ENCODE measurements at regions of chr2 and their contacts with region 1.

Region 1: GRCh38 chr2:13006829-13007717 is 290.3 kb downstream of the TRIB2 start:
- DNase-seq: no peak
- ATAC-seq: peak; percentile 93
- H3K4me3 ChIP-seq: no peak overlapping the region
- H3K27ac ChIP-seq: no peak overlapping the region
- H3K4me1 ChIP-seq: no peaks in the 10 kb centered on the region
- H3K27me3 ChIP-seq: no peaks in the 10 kb centered on the region; a peak in 1 of 4 replicates
- CTCF ChIP-seq: peak; percentile 65 to 78 (median 69)
- EP300 ChIP-seq: no peak
- POLR2A ChIP-seq: no peak
- RAD21 ChIP-seq: peak; percentile 75

Region 2: GRCh38 chr2:12931186-12931844 is 75.8 kb before region 1 on chr2:
- CTCF ChIA-PET with region 1: interaction called, 22 read pairs
- POLR2A ChIA-PET with region 1: no interaction called
- RAD21 ChIA-PET with region 1: interaction called, 5 read pairs
- SMC1A ChIA-PET with region 1: interaction called, 9 read pairs
- in situ Hi-C with region 1: no loop called
- intact Hi-C with region 1: no loop called
- DNase-seq: no peak
- ATAC-seq: peak; percentile 81
- H3K4me3 ChIP-seq: no peak overlapping the region
- H3K27ac ChIP-seq: no peak overlapping the region
- H3K4me1 ChIP-seq: no peaks in the 10 kb centered on the region
- H3K27me3 ChIP-seq: no peaks in the 10 kb centered on the region; a peak in 1 of 4 replicates
- CTCF ChIP-seq: peak; percentile 68 to 77 (median 75)
- EP300 ChIP-seq: no peak
- POLR2A ChIP-seq: no peak
- RAD21 ChIP-seq: peak; percentile 59

Region 3: GRCh38 chr2:12990523-12990922 is 16.6 kb before region 1 on chr2:
- CTCF ChIA-PET with region 1: interaction called, 11 read pairs
- POLR2A ChIA-PET with region 1: no interaction called
- RAD21 ChIA-PET with region 1: interaction called, 3 read pairs
- SMC1A ChIA-PET with region 1: interaction called, 6 read pairs
- in situ Hi-C with region 1: no loop called
- intact Hi-C with region 1: no loop called
- DNase-seq: no peak
- ATAC-seq: no peak
- H3K4me3 ChIP-seq: no peak overlapping the region
- H3K27ac ChIP-seq: no peak overlapping the region
- H3K4me1 ChIP-seq: no peaks in the 10 kb centered on the region
- H3K27me3 ChIP-seq: no peaks in the 10 kb centered on the region
- CTCF ChIP-seq: no peak
- EP300 ChIP-seq: no peak
- POLR2A ChIP-seq: no peak
- RAD21 ChIP-seq: no peak

Region 4: GRCh38 chr2:13021470-13021957 is 14.4 kb after region 1 on chr2:
- CTCF ChIA-PET with region 1: interaction called, 13 read pairs
- POLR2A ChIA-PET with region 1: no interaction called
- RAD21 ChIA-PET with region 1: interaction called, 3 read pairs
- SMC1A ChIA-PET with region 1: interaction called, 7 read pairs
- in situ Hi-C with region 1: no loop called
- intact Hi-C with region 1: no loop called
- DNase-seq: no peak
- ATAC-seq: no peak
- H3K4me3 ChIP-seq: no peak overlapping the region
- H3K27ac ChIP-seq: no peak overlapping the region
- H3K4me1 ChIP-seq: no peaks in the 10 kb centered on the region
- H3K27me3 ChIP-seq: no peaks in the 10 kb centered on the region
- CTCF ChIP-seq: no peak
- EP300 ChIP-seq: no peak
- POLR2A ChIP-seq: no peak
- RAD21 ChIP-seq: no peak

Region 5: DNA sequence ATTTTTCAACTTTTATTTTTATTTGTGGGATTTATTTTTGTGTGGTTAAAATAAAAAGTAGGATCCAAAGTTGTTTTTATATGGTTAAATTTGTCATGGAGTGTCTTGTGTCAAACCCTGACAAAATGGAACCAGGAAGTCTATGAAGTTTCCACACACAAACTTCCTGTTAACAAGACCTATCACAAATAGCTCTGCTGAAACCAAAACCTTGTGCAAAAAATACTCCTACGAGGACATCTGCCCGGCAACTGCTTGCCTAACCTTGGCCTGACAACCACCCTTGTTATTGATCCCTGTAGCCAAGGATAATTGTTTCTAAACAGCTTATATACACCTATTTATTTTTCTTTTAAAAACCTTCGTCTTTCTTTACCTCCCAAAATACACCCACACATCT is 99.2 kb after region 1 on chr2:
- CTCF ChIA-PET with region 1: no interaction called
- POLR2A ChIA-PET with region 1: no interaction called
- RAD21 ChIA-PET with region 1: no interaction called
- SMC1A ChIA-PET with region 1: no interaction called
- in situ Hi-C with region 1: no loop called
- intact Hi-C with region 1: no loop called
- DNase-seq: no peak
- ATAC-seq: peak; percentile 57; the same call in 2 of the 3 replicates
- H3K4me3 ChIP-seq: no peak overlapping the region
- H3K27ac ChIP-seq: no peak overlapping the region
- H3K4me1 ChIP-seq: no peaks in the 10 kb centered on the region
- H3K27me3 ChIP-seq: no peaks in the 10 kb centered on the region
- CTCF ChIP-seq: no peak
- EP300 ChIP-seq: no peak
- POLR2A ChIP-seq: no peak
- RAD21 ChIP-seq: no peak